PC-9 (cell line): ENCODE measurements at regions of chr10 and their contacts with region 1.

Region 1: DNA sequence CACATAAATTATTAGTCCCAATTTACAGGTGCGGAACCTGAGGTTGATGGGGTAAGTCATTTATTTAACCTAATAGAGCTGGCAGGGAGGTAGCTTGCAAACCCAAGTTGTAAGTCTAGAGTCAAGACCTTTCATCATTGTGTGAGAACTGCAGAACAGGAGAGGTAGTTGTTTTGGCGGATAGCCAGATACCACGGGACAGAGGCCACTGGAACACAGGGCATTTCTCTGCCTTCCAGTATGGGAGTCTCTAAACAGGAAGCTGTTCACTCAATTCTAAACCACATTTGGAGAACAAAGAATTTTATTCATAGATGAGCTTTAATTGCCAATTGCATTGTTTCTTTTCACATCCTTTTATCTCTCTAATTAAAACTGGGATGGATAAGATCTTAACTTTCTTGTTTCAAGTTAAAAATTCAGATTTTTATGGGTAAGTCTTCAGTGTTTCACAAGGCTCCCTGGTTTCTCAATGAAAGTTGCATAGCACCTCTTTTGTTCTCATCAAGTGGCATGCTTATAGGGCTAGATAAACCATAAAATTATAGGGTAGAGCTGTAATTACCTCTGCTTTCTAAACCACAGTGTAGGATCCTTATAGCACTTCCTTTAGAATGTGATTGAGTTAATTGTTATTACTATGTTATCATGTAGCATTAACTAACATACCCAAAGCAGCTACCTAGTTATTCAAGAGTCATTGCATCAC is 489.0 kb downstream of the GATA3 start:
- DNase-seq: peak; percentile 68 to 85
- H3K4me3 ChIP-seq: no peak overlapping the region; the same call in 1 of the 2 replicates
- H3K27ac ChIP-seq: peak overlapping the region; percentile 99
- H3K4me1 ChIP-seq: peaks cover 39% of the 10 kb centered on the region
- H3K27me3 ChIP-seq: no peaks in the 10 kb centered on the region
- CTCF ChIP-seq: no peak

Region 2: DNA sequence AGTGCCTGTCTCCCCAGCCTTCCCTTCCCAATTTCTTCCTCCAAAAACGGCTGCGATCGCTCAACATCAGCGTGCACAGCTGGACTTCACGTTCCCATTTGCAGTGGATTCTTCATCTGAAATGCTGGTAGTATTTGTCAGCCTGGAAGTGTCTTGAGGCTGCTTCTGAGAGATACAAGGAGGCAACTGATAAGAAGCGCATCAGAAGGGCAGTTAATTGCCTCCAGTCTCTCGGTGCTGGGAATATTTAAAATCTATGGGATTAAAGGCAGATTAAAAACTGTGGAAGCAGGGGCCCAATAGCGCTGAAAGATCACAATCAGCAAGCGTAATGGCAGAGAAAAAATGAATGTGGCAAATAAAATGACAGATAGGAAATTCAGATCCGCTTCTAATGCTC is 39.0 kb before region 1 on chr10:
- CTCF ChIA-PET with region 1: no interaction called
- POLR2A ChIA-PET with region 1: no interaction called
- intact Hi-C with region 1: no loop called
- DNase-seq: no peak
- H3K4me3 ChIP-seq: no peak overlapping the region
- H3K27ac ChIP-seq: no peak overlapping the region
- H3K4me1 ChIP-seq: no peaks in the 10 kb centered on the region
- H3K27me3 ChIP-seq: no peaks in the 10 kb centered on the region
- CTCF ChIP-seq: no peak

Region 3: GRCh38 chr10:8581536-8582267 is 38.2 kb after region 1 on chr10:
- CTCF ChIA-PET with region 1: no interaction called
- POLR2A ChIA-PET with region 1: interaction called, 3 read pairs
- intact Hi-C with region 1: loop called (anchors 2 kb)
- DNase-seq: peak; percentile 67 to 91
- H3K4me3 ChIP-seq: peak overlapping the region; percentile 26; the same call in 1 of the 2 replicates
- H3K27ac ChIP-seq: peak overlapping the region; percentile 92
- H3K4me1 ChIP-seq: peaks cover 34% of the 10 kb centered on the region
- H3K27me3 ChIP-seq: no peaks in the 10 kb centered on the region
- CTCF ChIP-seq: no peak